Activated CD4-positive, alpha-beta memory T cell treated with anti-CD3 and anti-CD28 coated beads for 36 hours (primary cell): ENCODE measurements at regions of chr4 and their contacts with region 1.

Region 1: GRCh38 chr4:89482248-89482647 is 174.6 kb upstream of the GPRIN3 start:
- DNase-seq: peak; percentile 17
- H3K4me3 Mint-ChIP-seq: no peak overlapping the region
- H3K27ac Mint-ChIP-seq: no peak overlapping the region
- H3K4me1 Mint-ChIP-seq: no peaks in the 10 kb centered on the region
- H3K27me3 Mint-ChIP-seq: no peaks in the 10 kb centered on the region

Region 2: GRCh38 chr4:89657931-89658700 is 175.9 kb after region 1 on chr4:
- CTCF ChIA-PET with region 1: no interaction called
- POLR2A ChIA-PET with region 1: no interaction called
- intact Hi-C with region 1: loop called (anchors 5 kb)
- DNase-seq: no peak
- H3K4me3 Mint-ChIP-seq: no peak overlapping the region
- H3K27ac Mint-ChIP-seq: no peak overlapping the region
- H3K4me1 Mint-ChIP-seq: peaks cover 4% of the 10 kb centered on the region
- H3K27me3 Mint-ChIP-seq: peaks cover 6% of the 10 kb centered on the region

Region 3: GRCh38 chr4:89904524-89904923 is 422.3 kb after region 1 on chr4:
- CTCF ChIA-PET with region 1: interaction called, 3 read pairs
- POLR2A ChIA-PET with region 1: no interaction called
- intact Hi-C with region 1: loop called (anchors 2 kb)
- DNase-seq: no peak
- H3K4me3 Mint-ChIP-seq: no peak overlapping the region
- H3K27ac Mint-ChIP-seq: no peak overlapping the region
- H3K4me1 Mint-ChIP-seq: peaks cover 2% of the 10 kb centered on the region
- H3K27me3 Mint-ChIP-seq: no peaks in the 10 kb centered on the region